Right ventricle myocardium inferior (tissue), 1 donor: ENCODE measurements at regions of chr16 and their contacts with region 1.

Region 1: DNA sequence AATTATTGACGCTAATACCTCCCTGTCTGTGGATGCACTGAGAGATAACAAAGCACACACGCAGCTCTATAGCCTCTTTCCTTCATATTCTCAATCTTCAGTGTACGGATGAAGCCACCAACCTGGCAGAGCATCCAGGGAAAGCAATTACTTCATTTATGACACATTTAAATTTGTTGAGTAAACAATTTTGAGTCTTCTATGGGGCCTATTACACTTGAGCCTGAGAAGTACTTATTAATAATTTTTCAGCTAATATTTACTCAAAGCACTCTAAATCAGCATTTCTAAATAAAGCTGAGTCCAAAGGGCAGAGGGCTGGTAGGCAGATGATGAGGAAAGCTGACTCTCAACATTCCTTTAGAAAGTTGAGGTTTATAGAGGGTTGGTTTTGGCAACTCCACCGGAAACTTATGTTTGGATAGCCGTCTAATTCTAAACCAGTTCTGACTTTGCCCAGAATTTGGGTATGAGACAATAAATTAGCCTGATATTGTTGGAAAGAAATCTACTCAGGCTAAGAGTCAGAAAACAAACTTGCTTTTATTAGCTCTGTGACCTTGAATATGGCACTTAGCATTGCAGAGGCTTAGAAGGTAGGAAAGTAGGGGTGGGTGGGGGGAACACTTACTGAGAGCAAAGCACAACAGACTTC is 643.5 kb downstream of the CDH11 start:
- DNase-seq: no peak
- ATAC-seq: no peak

Region 2: DNA sequence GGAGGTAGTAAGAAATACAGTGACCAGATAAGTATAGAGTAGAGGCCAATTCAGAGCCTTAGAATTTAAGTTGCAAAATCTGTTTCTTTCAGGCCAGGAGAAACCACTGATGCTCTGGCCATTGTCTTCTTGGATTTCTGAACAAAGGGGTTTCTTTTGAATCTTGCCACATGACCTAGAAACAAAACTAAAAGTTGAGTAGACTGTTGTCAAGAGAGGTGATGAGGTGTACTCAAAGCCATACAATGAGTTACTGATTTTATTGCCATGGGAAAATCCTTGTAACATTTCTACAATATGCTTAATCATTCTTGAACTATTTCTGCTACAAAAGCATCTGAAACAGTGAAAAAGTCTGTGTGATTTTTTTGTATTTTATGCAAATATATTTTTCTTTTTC is 237.8 kb before region 1 on chr16:
- intact Hi-C with region 1: loop called (anchors 10 kb)
- DNase-seq: no peak
- ATAC-seq: no peak